ACHN (cell line): ENCODE measurements at regions of chr7 and their contacts with region 1.

Region 1: DNA sequence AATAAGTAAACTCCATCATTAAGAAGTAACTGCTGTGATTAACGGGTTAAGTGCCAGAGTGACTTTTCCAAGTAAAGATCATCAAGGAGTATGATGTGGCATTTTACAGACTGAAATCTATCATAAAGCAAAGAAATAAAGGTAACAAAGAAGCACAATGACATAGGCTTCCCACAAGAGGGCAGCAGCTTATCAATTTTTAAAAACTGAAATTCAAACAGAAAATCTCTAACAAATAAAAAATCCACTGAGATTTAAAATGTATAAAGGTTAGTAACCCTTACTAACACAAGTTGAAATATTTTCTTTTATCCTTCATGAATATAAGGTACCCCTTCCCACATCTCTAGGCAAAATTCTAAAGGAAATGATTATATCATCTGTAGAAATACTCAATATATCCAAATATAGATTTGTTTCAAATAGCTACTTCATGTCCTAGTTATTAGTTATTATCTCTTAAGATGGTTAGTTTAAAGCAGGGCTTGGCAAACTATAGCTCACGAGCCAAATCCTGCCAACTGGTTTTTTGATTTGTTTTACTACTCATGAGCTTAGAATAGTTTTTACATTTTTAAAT is 29.2 kb downstream of the FAM3C start:
- DNase-seq: peak; percentile 59

Region 2: GRCh38 chr7:121428855-121429489 is 62.0 kb after region 1 on chr7:
- in situ Hi-C with region 1: no loop called
- DNase-seq: peak; percentile 89

Region 3: DNA sequence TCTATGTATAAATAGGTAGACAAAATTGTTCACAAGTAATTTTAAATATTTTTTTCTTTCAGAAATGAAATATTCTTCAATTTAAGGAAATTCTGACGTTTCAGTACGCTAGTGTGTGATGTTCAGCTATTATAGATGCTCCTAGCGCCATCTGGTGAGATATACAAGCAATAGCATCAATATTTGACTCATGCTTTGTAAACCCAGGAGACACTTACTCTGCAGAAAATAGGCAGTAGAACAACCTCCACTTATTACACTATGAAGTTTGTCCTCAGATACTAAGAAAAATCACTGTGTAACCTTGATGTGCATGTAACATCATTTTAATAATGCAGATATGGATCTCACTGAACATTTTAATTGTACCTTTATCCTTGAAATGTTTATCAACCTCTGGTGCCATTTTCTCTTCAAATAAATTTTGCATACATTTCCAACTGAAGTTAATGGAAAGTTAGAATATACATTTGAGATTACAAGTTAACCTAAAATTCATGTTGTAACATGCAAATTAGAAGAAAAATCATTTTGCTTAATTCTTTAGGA is 180.7 kb after region 1 on chr7:
- in situ Hi-C with region 1: loop called (anchors 25 kb)
- DNase-seq: peak; percentile 84

Region 4: GRCh38 chr7:121730869-121731268 is 363.9 kb after region 1 on chr7:
- in situ Hi-C with region 1: no loop called
- DNase-seq: no peak